Sigmoid colon (tissue), 7 donors: ENCODE measurements at regions of chr2 and their contacts with region 1.

Region 1: DNA sequence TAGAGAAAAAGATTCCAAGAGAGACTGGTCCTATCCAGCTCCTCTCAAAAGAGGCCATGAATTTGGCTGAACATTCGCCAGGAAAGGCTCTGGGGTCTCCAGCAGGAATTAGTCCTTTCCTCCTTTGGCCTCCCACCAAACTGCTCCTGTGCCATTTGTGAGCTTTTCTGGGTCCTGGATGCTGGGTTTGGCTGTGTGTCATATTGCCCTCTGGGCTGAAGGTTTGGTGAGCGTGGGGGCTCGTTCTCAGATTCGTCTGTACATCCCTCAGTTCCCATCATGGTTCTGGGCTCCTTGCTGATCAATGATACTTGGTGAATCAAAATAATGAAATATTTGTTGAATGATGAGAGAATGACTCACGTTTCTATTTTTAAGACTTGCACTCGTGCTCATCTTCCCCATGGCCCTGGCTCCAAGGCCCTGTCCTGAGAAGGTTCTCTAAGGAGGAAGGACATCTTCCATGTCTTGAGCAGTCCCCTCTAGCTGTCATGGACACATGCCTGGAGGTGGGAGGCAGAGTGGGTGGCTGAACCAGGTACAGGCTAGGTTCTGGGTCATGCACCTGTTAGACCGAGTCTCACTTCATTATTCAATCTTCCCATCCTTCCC is 47.8 kb upstream of the RHOB start:
- DNase-seq: peak; percentile 50
- H3K4me3 ChIP-seq: no peak overlapping the region
- H3K27ac ChIP-seq: peak overlapping the region in 1 of 4 donors; percentile 46
- H3K4me1 ChIP-seq: peaks cover 0 to 21% (median 14%) of the 10 kb centered on the region in 4 donors
- H3K27me3 ChIP-seq: no peaks in the 10 kb centered on the region
- CTCF ChIP-seq: no peak
- EP300 ChIP-seq: no peak
- POLR2A ChIP-seq: no peak

Region 2: GRCh38 chr2:20438334-20439192 is 39.5 kb after region 1 on chr2:
- intact Hi-C with region 1: loop called (anchors 5 kb)
- DNase-seq: peak; percentile 84
- H3K4me3 ChIP-seq: no peak overlapping the region
- H3K27ac ChIP-seq: peak overlapping the region; percentile 56 to 69 (median 62)
- H3K4me1 ChIP-seq: peaks cover 0 to 15% (median 10%) of the 10 kb centered on the region in 4 donors
- H3K27me3 ChIP-seq: no peaks in the 10 kb centered on the region
- CTCF ChIP-seq: no peak
- EP300 ChIP-seq: peak; percentile 89 to 98 (median 92)
- POLR2A ChIP-seq: peak; percentile 40 to 47